Activated T-helper 1 cell treated with anti-CD3 and anti-CD28 coated beads, Interleukin-12 subunit alpha, Interleukin-12 subunit beta, Interleukin-2, Interleukin-4 antibody, amounts not matched to agents 30 ng/mL and 10 ng/mL and 1 ng/mL, durations not matched to agents 14 hours and 24 hours and 36 hours (primary cell): ENCODE measurements at regions of chr12 and their contacts with region 1.

Region 1: GRCh38 chr12:13100882-13101769 is 2.3 kb downstream of the GSG1 start:
- DNase-seq: peak; percentile 90
- H3K4me3 Mint-ChIP-seq: peak overlapping the region; percentile 74
- H3K27ac Mint-ChIP-seq: peak overlapping the region; percentile 89
- H3K4me1 Mint-ChIP-seq: peaks cover 43% of the 10 kb centered on the region
- H3K27me3 Mint-ChIP-seq: peaks cover 5% of the 10 kb centered on the region

Region 2: GRCh38 chr12:12356886-12357718 is 744.0 kb before region 1 on chr12 and contains the start of gene BORCS5:
- intact Hi-C with region 1: loop called (anchors 10 kb)
- DNase-seq: peak; percentile 98
- H3K4me3 Mint-ChIP-seq: peak within 1 kb of the TSS; percentile 97
- H3K27ac Mint-ChIP-seq: peak within 1 kb of the TSS; percentile 96
- H3K4me1 Mint-ChIP-seq: peaks cover 48% of the 10 kb centered on the region
- H3K27me3 Mint-ChIP-seq: no peaks in the 10 kb centered on the region
- total RNA-seq, gene BORCS5: 34.5 and 39.6 TPM in 2 replicates

Region 3: GRCh38 chr12:12837025-12837872 is 263.9 kb before region 1 on chr12:
- intact Hi-C with region 1: no loop called
- DNase-seq: no peak
- H3K4me3 Mint-ChIP-seq: no peak overlapping the region
- H3K27ac Mint-ChIP-seq: peak overlapping the region; percentile 54
- H3K4me1 Mint-ChIP-seq: peaks cover 24% of the 10 kb centered on the region
- H3K27me3 Mint-ChIP-seq: no peaks in the 10 kb centered on the region

Region 4: DNA sequence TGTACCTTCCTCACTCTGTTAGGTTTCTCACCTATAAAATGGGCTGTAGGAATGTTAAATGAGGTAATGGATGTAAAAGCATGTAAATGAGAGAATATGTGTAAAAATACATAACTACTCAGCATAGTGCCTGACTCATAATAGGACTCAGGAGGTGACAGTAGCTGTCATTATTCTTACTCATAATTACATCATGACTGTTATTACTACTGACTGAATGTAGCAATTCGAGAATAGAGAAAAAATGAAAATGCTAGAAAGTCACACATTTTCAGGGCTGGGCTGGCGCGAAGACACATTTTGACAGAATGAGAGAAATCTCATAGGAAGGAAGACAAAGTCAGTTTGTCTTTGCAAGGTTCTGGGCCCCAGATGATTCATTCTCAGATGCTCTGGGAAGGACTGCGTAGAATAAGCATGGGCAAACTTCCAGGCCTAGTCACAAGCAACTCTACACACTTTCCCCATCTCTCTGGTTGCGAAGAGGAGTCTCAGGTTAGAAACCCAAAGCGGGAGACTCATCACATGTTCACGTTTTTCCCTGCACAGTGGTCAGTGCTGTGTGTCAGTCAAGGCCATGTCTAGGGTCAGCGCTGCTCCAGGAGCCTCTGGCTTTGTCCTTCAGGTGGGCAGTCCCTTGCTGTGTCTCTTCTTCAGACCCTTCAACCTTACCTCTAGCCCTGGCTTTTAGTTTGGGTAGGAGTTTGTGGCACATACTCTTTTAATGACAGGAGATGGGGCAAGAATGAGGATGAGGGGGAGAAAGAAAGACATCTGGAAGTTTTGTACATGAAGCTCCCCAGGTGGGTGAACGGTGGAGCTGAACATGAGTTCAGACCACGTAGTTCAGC is 201.4 kb before region 1 on chr12:
- intact Hi-C with region 1: loop called (anchors 1 kb)
- DNase-seq: peak; percentile 26
- H3K4me3 Mint-ChIP-seq: no peak overlapping the region
- H3K27ac Mint-ChIP-seq: peak overlapping the region; percentile 37
- H3K4me1 Mint-ChIP-seq: peaks cover 13% of the 10 kb centered on the region
- H3K27me3 Mint-ChIP-seq: peaks cover 12% of the 10 kb centered on the region

Region 5: GRCh38 chr12:12999959-13000615 is 101.0 kb before region 1 on chr12 and contains the start of gene HEBP1:
- intact Hi-C with region 1: loop called (anchors 1 kb)
- DNase-seq: peak; percentile 91
- H3K4me3 Mint-ChIP-seq: peak within 1 kb of the TSS; percentile 87
- H3K27ac Mint-ChIP-seq: peak within 1 kb of the TSS; percentile 86
- H3K4me1 Mint-ChIP-seq: peaks cover 37% of the 10 kb centered on the region
- H3K27me3 Mint-ChIP-seq: peaks cover 34% of the 10 kb centered on the region
- total RNA-seq, gene HEBP1: 9.5 and 11.3 TPM in 2 replicates

Region 6: GRCh38 chr12:13165617-13166041 is 64.5 kb after region 1 on chr12:
- intact Hi-C with region 1: loop called (anchors 2 kb)
- DNase-seq: peak; percentile 54
- H3K4me3 Mint-ChIP-seq: no peak overlapping the region
- H3K27ac Mint-ChIP-seq: no peak overlapping the region
- H3K4me1 Mint-ChIP-seq: peaks cover 19% of the 10 kb centered on the region
- H3K27me3 Mint-ChIP-seq: peaks cover 14% of the 10 kb centered on the region

Region 7: DNA sequence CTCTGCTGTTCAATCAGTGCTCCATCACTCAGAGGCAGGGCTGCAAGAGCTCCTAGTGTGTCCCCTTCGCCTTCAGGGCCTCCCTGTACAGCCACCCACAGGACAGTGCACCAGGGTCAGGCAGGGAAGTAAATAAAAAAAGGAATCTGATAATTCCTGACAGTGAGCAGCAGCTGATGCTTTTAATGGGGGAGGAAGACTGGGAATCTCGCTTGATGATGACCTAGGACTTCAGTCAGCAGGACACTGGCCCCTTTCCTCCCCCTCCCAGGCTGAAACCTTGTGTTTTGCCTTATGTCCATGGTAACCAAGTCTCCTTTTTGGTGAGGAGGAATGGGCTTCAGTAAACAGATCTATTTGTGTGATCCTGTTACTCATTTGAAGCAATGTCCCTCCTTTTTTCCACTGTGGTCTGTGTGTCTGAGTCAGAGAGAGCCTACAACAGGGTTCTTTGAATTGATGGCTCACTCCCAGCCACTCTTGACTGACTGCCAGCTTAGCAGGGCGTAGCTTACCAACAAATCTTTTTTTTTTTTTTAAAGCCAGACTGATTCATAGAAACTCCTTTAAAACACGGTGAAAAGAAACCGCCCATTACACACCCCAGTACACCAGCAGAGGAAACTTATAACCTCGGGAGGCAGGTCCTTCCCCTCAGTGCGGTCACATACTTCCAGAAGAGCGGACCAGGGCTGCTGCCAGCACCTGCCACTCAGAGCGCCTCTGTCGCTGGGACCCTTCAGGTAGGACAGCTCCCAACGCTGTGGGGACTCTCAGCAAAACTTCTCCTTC is 95.2 kb after region 1 on chr12 and contains the start of gene EMP1:
- intact Hi-C with region 1: loop called (anchors 1 kb)
- DNase-seq: peak; percentile 65
- H3K4me3 Mint-ChIP-seq: peak within 1 kb of the TSS; percentile 79
- H3K27ac Mint-ChIP-seq: peak within 1 kb of the TSS; percentile 81
- H3K4me1 Mint-ChIP-seq: peaks cover 30% of the 10 kb centered on the region
- H3K27me3 Mint-ChIP-seq: peaks cover 19% of the 10 kb centered on the region
- total RNA-seq, gene EMP1: 29.6 and 33.6 TPM in 2 replicates

Region 8: GRCh38 chr12:13233830-13234641 is 132.9 kb after region 1 on chr12:
- intact Hi-C with region 1: loop called (anchors 1 kb)
- DNase-seq: no peak
- H3K4me3 Mint-ChIP-seq: no peak overlapping the region
- H3K27ac Mint-ChIP-seq: no peak overlapping the region
- H3K4me1 Mint-ChIP-seq: no peaks in the 10 kb centered on the region
- H3K27me3 Mint-ChIP-seq: peaks cover 10% of the 10 kb centered on the region

Region 9: GRCh38 chr12:13499008-13499407 is 397.9 kb after region 1 on chr12:
- intact Hi-C with region 1: no loop called
- DNase-seq: no peak
- H3K4me3 Mint-ChIP-seq: no peak overlapping the region
- H3K27ac Mint-ChIP-seq: no peak overlapping the region
- H3K4me1 Mint-ChIP-seq: no peaks in the 10 kb centered on the region
- H3K27me3 Mint-ChIP-seq: no peaks in the 10 kb centered on the region

Region 10: DNA sequence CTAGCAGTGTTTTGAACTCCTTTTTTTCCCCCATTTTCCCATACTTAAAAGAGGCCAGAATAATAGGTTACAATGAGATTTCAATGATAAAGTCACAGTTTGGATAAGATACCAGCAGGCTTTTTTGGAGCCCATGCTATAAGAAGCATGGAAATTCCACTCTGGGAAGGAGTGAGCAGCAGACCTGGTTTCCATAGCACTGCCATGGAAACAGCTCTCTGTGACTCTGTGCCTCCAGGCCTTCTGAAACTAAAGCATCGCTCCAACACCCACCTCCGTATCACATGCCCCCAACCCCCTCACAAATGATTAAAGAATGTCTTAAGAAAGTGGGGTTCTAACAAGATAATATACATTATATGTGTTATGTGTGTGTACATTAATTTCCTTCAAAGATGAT is 715.3 kb after region 1 on chr12:
- intact Hi-C with region 1: no loop called
- DNase-seq: no peak
- H3K4me3 Mint-ChIP-seq: no peak overlapping the region
- H3K27ac Mint-ChIP-seq: no peak overlapping the region
- H3K4me1 Mint-ChIP-seq: no peaks in the 10 kb centered on the region
- H3K27me3 Mint-ChIP-seq: peaks cover 1% of the 10 kb centered on the region